ENCODE measurements at regions of chr19 and their contacts with region 1.

Region 1: GRCh38 chr19:46283771-46284170 is 13.1 kb upstream of the HIF3A start:
- DNase-seq: no peak
- ATAC-seq: no peak
- H3K4me3 ChIP-seq: no peak overlapping the region
- H3K27ac ChIP-seq: no peak overlapping the region
- H3K4me1 ChIP-seq: peaks cover 1% of the 10 kb centered on the region
- CTCF ChIP-seq: no peak
- EP300 ChIP-seq: no peak
- POLR2A ChIP-seq: no peak
- RAD21 ChIP-seq: no peak

Region 2: DNA sequence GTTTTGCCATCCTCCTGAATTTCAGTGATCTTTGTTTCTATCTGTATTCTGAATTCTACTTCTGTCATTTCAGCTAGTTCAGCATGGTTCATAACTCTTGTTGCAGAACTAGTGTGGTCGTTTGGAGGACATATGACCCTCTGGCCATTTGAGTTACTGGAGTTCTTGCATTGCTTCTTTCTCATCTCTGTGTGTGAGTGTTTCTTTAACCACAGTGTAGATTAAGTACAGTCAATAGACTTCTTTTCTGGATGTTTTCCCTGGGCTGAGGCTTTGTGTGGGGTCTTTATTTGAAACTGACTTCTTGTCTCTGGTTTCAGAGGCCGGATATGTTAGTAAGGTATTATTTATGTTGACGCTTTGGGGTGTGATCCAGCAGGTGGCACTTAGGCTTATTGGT is 121.0 kb before region 1 on chr19:
- CTCF ChIA-PET with region 1: no interaction called
- POLR2A ChIA-PET with region 1: no interaction called
- DNase-seq: no peak
- ATAC-seq: no peak
- H3K4me3 ChIP-seq: no peak overlapping the region
- H3K27ac ChIP-seq: no peak overlapping the region
- H3K4me1 ChIP-seq: peaks cover 7% of the 10 kb centered on the region; the same call in 1 of the 3 replicates
- CTCF ChIP-seq: no peak
- EP300 ChIP-seq: no peak
- POLR2A ChIP-seq: no peak
- RAD21 ChIP-seq: no peak

Region 3: DNA sequence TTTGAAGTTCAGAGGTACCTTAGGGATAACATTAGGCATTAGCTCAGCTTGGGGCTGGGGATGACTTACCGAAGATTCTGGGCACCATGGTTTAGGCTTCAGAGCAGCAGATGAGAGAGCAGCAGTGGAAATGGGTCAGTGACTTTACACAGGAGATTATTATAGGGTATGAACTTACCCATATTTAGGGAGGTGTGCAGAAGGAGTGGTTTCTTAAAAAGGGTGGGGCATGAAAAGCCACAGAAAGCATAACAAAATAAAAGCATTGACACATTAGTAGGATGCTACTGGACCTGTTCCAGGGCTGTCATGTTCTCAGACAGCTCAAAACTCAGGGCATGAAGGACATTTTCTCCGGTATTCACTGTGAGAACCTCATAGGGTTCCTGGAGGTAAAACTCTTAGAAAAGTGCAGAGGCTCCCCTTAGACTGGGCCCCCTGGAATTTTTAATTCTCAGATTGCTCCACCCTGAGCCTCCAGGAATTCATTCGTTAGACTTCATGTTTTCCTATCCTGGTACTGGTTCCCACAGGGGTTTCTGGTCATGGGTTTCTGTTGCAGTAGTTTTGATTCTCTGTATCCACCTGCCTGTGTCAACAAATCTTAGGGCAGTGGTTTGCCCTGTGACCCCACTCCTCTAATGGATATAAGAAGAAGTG is 33.6 kb before region 1 on chr19:
- CTCF ChIA-PET with region 1: no interaction called
- POLR2A ChIA-PET with region 1: no interaction called
- DNase-seq: no peak
- ATAC-seq: 0 out of 6 replicates have a peak, but pooled peaks of 1 of the 2 experiments have one; percentile 30
- H3K4me3 ChIP-seq: no peak overlapping the region
- H3K27ac ChIP-seq: no peak overlapping the region
- H3K4me1 ChIP-seq: no peaks in the 10 kb centered on the region
- CTCF ChIP-seq: no peak
- EP300 ChIP-seq: no peak
- POLR2A ChIP-seq: no peak
- RAD21 ChIP-seq: no peak

Region 4: DNA sequence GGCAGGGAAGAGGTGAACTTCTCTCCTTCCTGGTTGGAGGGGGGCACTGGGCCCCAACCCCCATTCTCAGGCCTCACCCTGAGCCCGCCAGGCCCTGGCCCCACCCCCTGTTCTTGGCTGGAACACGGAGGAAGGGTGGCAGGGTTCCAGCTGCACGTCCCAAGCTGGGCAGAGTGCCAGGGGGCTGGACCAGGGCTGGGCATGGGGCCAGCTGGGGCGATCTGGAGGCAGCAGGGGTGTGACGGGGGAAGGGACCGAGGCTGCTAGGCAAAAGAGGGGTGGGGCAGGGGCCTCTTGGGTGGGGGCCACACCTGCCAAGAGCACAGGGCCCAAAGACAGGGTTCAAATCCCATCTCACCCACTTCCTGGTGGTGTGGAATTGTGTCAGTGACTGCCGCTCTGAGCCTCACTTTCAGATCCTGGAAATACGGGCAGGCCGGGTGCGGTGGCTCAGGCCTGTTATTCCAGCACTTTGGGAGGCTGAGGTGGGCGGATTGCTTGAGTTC is 15.3 kb after region 1 on chr19:
- CTCF ChIA-PET with region 1: interaction called, 62 read pairs
- POLR2A ChIA-PET with region 1: interaction called, 5 read pairs
- DNase-seq: peak; percentile 90 to 95
- ATAC-seq: peak; percentile 60 to 73
- H3K4me3 ChIP-seq: 0 out of 3 replicates have a peak overlapping the region, but pooled peaks have one; percentile 15
- H3K27ac ChIP-seq: peak overlapping the region; percentile 67 to 76
- H3K4me1 ChIP-seq: peaks cover 34% of the 10 kb centered on the region
- CTCF ChIP-seq: no peak
- EP300 ChIP-seq: no peak
- POLR2A ChIP-seq: no peak
- RAD21 ChIP-seq: no peak

Region 5: DNA sequence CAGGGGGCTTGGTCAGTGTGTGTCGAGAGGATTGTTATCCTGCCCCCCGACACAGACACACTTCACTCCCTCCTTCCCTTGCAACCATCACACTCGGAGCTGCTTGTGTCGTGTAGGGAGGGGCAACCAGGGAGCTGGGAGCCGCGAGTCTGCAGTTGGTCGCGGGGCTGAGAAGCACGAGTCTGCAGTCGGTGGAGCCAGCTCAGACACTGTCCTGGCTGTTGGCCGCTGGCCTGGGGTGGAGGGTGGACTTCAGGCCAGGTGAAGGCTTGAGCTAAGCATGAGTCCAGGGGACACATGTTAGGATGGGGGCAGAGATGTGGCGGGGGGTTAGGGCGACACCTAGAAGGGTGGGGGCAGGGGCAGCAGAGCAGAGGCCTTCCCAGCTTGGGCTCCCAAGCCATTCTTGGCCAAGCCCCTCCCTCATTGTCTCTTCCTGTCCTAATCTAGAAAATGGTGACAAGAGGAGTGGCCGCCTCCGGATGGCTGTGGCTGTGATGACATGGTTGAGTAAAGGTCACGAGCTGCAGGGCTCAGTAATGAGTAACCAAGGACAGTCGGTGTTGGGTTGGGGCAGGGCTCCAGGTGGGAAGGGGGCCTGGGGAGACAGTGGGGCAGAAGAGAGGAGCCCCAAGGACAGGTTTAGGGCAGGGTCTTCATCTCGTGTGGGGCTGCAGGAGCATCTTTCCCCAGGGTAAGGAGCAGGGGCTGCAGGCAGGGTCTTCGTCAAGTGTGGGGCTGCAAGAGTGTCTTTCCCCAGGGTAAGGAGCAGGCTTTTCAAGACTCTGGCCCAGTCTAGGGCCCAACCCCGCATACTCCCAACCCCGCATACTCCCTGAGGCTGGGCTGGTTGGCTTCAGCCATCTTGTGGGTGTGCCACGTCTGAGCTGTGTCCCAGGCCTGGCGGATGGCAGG is 71.7 kb after region 1 on chr19:
- CTCF ChIA-PET with region 1: interaction called, 36 read pairs
- POLR2A ChIA-PET with region 1: no interaction called
- DNase-seq: peak in 1 of 2 experiments; percentile 21
- ATAC-seq: peak in 1 of 2 experiments; percentile 31; a peak in 3 of 6 replicates
- H3K4me3 ChIP-seq: no peak overlapping the region
- H3K27ac ChIP-seq: peak overlapping the region in 1 of 2 experiments; percentile 45; a peak in 3 of 6 replicates
- H3K4me1 ChIP-seq: peaks cover 44% of the 10 kb centered on the region
- CTCF ChIP-seq: no peak
- EP300 ChIP-seq: no peak
- POLR2A ChIP-seq: no peak
- RAD21 ChIP-seq: no peak

Region 6: GRCh38 chr19:46404055-46404752 is 120.4 kb after region 1 on chr19:
- CTCF ChIA-PET with region 1: interaction called, 77 read pairs
- POLR2A ChIA-PET with region 1: no interaction called
- DNase-seq: peak; percentile 80 to 93
- ATAC-seq: peak; percentile 89 to 90
- H3K4me3 ChIP-seq: peak overlapping the region; percentile 53
- H3K27ac ChIP-seq: peak overlapping the region; percentile 90 to 92
- H3K4me1 ChIP-seq: no peaks in the 10 kb centered on the region
- CTCF ChIP-seq: peak; percentile 32; the same call in 2 of the 3 replicates
- EP300 ChIP-seq: no peak
- POLR2A ChIP-seq: peak; percentile 78; the same call in 1 of the 2 replicates
- RAD21 ChIP-seq: no peak

Region 7: GRCh38 chr19:46503848-46504453 is 220.2 kb after region 1 on chr19:
- CTCF ChIA-PET with region 1: interaction called, 34 read pairs
- POLR2A ChIA-PET with region 1: no interaction called
- DNase-seq: no peak
- ATAC-seq: no peak
- H3K4me3 ChIP-seq: no peak overlapping the region
- H3K27ac ChIP-seq: no peak overlapping the region
- H3K4me1 ChIP-seq: no peaks in the 10 kb centered on the region
- CTCF ChIP-seq: no peak
- EP300 ChIP-seq: no peak
- POLR2A ChIP-seq: no peak
- RAD21 ChIP-seq: no peak

Measured in A549 (cell line).